CD14-positive monocyte (primary cell): ENCODE measurements at regions of chr18 and their contacts with region 1.

Region 1: DNA sequence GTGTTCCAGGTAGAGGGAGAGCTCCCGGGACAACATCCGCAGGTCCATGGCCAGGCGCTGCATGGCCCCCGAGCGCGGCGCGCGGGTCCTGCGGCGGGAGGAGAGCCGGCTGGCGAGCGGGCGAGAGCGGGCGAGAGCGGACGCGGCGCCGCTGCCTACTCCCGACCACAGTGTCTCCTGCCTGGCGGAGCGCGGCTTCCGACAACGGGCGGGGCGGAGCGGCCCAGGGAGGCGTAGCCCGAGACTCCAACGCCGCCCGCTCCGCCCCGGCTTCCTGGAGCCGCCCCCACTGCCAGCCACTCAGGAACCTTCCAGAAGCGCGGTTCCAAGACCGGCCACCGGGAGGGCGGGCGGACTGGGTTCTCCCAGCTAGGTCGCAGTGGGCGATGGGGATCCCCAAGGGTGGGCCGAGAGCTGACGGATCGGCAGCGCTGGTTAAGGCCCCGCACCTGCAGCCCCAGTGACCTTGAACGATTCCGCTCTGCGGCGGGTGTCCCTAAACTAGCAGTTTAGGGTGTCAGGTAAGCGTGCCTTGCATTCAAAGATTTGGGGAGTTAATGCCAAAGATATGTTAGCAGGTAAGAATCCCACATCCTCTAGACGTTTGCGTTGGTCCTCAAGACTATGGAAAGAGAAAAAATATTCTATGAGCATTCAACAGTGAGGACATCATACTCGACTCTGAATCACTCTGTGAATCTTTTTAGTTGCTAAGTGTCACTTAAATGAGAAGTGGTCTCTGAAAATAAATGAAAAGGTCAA is at the start of gene ABHD3:
- DNase-seq: peak; percentile 87 to 92 (median 89)
- H3K4me3 ChIP-seq: peak within 1 kb of the TSS; percentile 61 to 96 (median 88)
- H3K4me3 Mint-ChIP-seq: peak within 1 kb of the TSS; percentile 96 to 98
- H3K27ac ChIP-seq: peak within 1 kb of the TSS; percentile 88 to 92
- H3K27ac Mint-ChIP-seq: peak within 1 kb of the TSS; percentile 90 to 97 (median 95)
- H3K4me1 ChIP-seq: peaks cover 18 to 32% of the 10 kb centered on the region in 2 donors
- H3K4me1 Mint-ChIP-seq: peaks cover 30% of the 10 kb centered on the region
- H3K27me3 ChIP-seq: no peaks in the 10 kb centered on the region
- H3K27me3 Mint-ChIP-seq: peaks cover 0 to 3% (median 2%) of the 10 kb centered on the region in 3 donors
- CTCF ChIP-seq: peak; percentile 67
- polyA plus RNA-seq, gene ABHD3: 24.6 to 63.6 (median 42.0) TPM

Region 2: GRCh38 chr18:21600526-21601410 is 104.0 kb before region 1 on chr18 and contains the start of gene ESCO1:
- intact Hi-C with region 1: loop called in 1 of 2 experiments (anchors 5 kb)
- DNase-seq: peak; percentile 97 to 100 (median 100)
- H3K4me3 ChIP-seq: peak within 1 kb of the TSS; percentile 59 to 100 (median 92)
- H3K4me3 Mint-ChIP-seq: peak within 1 kb of the TSS; percentile 95 to 99
- H3K27ac ChIP-seq: peak within 1 kb of the TSS; percentile 100
- H3K27ac Mint-ChIP-seq: peak within 1 kb of the TSS; percentile 97 to 100 (median 99)
- H3K4me1 ChIP-seq: peaks cover 32 to 37% of the 10 kb centered on the region in 2 donors
- H3K4me1 Mint-ChIP-seq: peaks cover 38% of the 10 kb centered on the region
- H3K27me3 ChIP-seq: no peaks in the 10 kb centered on the region
- H3K27me3 Mint-ChIP-seq: peaks cover 0 to 8% (median 0%) of the 10 kb centered on the region in 3 donors
- CTCF ChIP-seq: peak; percentile 99
- polyA plus RNA-seq, gene ESCO1: 1.3 to 6.1 (median 2.5) TPM

Region 3: GRCh38 chr18:21612125-21612991 is 92.4 kb before region 1 on chr18 and contains the start of gene SNRPD1:
- intact Hi-C with region 1: loop called in 1 of 2 experiments (anchors 5 kb)
- DNase-seq: peak; percentile 86 to 89 (median 87)
- H3K4me3 ChIP-seq: peak within 1 kb of the TSS; percentile 69 to 87 (median 86)
- H3K4me3 Mint-ChIP-seq: peak within 1 kb of the TSS; percentile 93 to 99
- H3K27ac ChIP-seq: peak within 1 kb of the TSS; percentile 86 to 93
- H3K27ac Mint-ChIP-seq: peak within 1 kb of the TSS; percentile 95 to 99 (median 98)
- H3K4me1 ChIP-seq: peaks cover 20 to 21% of the 10 kb centered on the region in 2 donors
- H3K4me1 Mint-ChIP-seq: peaks cover 23% of the 10 kb centered on the region
- H3K27me3 ChIP-seq: no peaks in the 10 kb centered on the region
- H3K27me3 Mint-ChIP-seq: peaks cover 0 to 1% (median 1%) of the 10 kb centered on the region in 3 donors
- CTCF ChIP-seq: peak; percentile 92
- polyA plus RNA-seq, gene SNRPD1: 13.0 to 56.7 (median 50.9) TPM

Region 4: GRCh38 chr18:21740724-21741510 is 36.1 kb after region 1 on chr18 and contains the start of gene MIB1:
- intact Hi-C with region 1: loop called (anchors 2 kb)
- DNase-seq: peak in 2 of 3 donors; percentile 38 to 57
- H3K4me3 ChIP-seq: peak within 1 kb of the TSS; percentile 87 to 92 (median 89)
- H3K4me3 Mint-ChIP-seq: peak within 1 kb of the TSS; percentile 95 to 97
- H3K27ac ChIP-seq: peak within 1 kb of the TSS; percentile 94 to 96
- H3K27ac Mint-ChIP-seq: peak within 1 kb of the TSS; percentile 94 to 99 (median 98)
- H3K4me1 ChIP-seq: peaks cover 16 to 32% of the 10 kb centered on the region in 2 donors
- H3K4me1 Mint-ChIP-seq: peaks cover 26% of the 10 kb centered on the region
- H3K27me3 ChIP-seq: no peaks in the 10 kb centered on the region
- H3K27me3 Mint-ChIP-seq: peaks cover 0 to 1% (median under 1%) of the 10 kb centered on the region in 3 donors
- CTCF ChIP-seq: no peak
- polyA plus RNA-seq, gene MIB1: 5.7 to 8.5 (median 7.8) TPM

Region 5: GRCh38 chr18:21760321-21760720 is 55.5 kb after region 1 on chr18:
- intact Hi-C with region 1: no loop called
- DNase-seq: no peak
- H3K4me3 ChIP-seq: no peak overlapping the region
- H3K4me3 Mint-ChIP-seq: no peak overlapping the region
- H3K27ac ChIP-seq: no peak overlapping the region
- H3K27ac Mint-ChIP-seq: peak overlapping the region in 2 of 7 donors; percentile 32
- H3K4me1 ChIP-seq: peaks cover 4 to 5% of the 10 kb centered on the region in 2 donors
- H3K4me1 Mint-ChIP-seq: peaks cover 15% of the 10 kb centered on the region
- H3K27me3 ChIP-seq: no peaks in the 10 kb centered on the region
- H3K27me3 Mint-ChIP-seq: no peaks in the 10 kb centered on the region
- CTCF ChIP-seq: no peak